ENCODE measurements at regions of chr1 and their contacts with region 1.

Region 1: DNA sequence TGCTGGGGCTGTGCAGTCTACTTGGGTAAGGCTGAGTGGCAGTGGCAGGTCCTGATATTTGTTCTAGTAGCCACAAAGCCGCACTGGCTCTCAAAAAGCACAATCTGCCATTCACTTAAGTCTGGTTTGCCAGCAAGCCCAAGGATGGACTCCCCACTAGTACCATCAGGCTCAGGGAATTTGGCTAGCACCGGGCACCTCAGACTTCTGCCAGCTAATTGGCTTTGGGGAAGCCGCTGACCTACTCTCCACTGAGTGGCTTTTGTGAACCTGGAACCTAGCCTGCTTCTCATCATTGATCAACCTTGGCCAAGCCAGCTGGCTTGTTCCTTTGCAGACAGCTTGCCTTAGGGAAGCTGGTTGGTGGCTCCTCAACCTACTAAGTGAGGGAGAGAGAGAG is 83.1 kb downstream of the ESRRG start:
- DNase-seq: no peak

Region 2: DNA sequence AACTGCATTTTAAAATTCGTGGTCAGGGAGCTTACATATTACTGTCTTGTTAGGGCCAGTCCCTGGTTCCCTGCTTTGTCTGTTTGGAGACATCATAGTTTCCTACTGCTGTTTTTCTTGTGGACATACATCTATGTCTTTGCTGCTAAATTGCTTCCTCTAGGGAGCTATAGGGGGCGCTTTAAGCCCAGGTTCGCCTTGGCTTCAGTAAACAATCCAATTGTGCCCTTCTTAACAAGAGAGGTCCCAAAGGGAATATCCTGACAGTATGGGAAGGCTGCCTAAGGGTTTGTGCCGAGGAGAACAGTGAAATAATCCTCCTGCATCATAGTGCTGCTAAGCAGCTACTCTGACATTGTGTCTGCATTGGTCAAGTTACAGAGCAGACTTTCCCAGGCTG is 329.3 kb before region 1 on chr1:
- intact Hi-C with region 1: no loop called
- DNase-seq: no peak

Region 3: GRCh38 chr1:216434232-216434631 is 205.9 kb before region 1 on chr1:
- intact Hi-C with region 1: no loop called
- DNase-seq: no peak

Region 4: GRCh38 chr1:216456682-216457081 is 183.4 kb before region 1 on chr1:
- intact Hi-C with region 1: loop called (anchors 10 kb)
- DNase-seq: no peak